ENCODE measurements at regions of chr14 and their contacts with region 1.

Region 1: GRCh38 chr14:20682435-20683124 is 1.8 kb upstream of the RNASE4 start:
- DNase-seq: peak; percentile 88
- ATAC-seq: peak; percentile 57
- H3K4me3 ChIP-seq: peak overlapping the region; percentile 81 to 95 (median 92)
- H3K4me3 Mint-ChIP-seq: no peak overlapping the region
- H3K27ac ChIP-seq: peak overlapping the region; percentile 92 to 94
- H3K27ac Mint-ChIP-seq: no peak overlapping the region
- H3K4me1 ChIP-seq: peaks cover 31 to 48% of the 10 kb centered on the region in 2 donors
- H3K4me1 Mint-ChIP-seq: peaks cover 15% of the 10 kb centered on the region
- H3K27me3 ChIP-seq: no peaks in the 10 kb centered on the region
- H3K27me3 Mint-ChIP-seq: no peaks in the 10 kb centered on the region
- CTCF ChIP-seq: no peak

Region 2: DNA sequence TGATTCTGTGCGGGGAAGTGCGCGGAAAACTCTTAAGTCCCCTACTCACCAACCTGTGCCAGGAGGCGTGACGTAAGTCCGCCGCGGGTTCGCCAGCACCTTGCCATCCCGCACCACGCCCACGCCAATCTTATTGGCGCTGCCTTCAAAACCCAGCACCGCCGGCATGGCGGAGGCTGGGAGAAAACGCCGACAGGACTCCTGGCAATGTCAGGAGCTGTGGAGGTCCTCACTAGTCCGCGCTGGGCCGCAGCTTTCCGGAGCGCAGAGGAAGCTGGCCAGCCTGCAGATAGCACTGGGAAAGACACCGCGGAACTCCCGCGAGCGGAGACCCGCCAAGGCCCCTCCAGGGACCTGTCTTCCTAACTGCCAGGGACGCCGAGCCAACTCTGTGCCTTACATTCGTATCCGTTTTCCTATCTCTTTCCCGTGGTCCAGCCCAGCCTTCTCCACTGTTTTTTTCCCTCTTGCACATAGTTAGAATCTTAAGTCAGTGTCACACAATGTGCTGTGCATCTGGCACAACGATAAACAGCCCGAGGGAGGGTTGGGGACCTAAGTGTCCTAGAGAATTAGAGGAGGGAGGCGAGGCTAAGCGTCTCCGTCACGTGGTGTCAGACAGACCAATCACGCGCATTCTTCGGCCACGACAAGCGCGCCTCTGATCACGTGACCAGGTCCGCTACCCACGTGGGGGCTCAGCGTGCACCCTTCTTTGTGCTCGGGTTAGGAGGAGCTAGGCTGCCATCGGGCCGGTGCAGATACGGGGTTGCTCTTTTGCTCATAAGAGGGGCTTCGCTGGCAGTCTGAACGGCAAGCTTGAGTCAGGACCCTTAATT is 227.8 kb before region 1 on chr14 and contains the starts of genes APEX1 and OSGEP:
- CTCF ChIA-PET with region 1: no interaction called
- POLR2A ChIA-PET with region 1: no interaction called
- intact Hi-C with region 1: loop called (anchors 1 kb)
- DNase-seq: peak; percentile 99
- ATAC-seq: peak; percentile 91
- H3K4me3 ChIP-seq: peak within 1 kb of the TSS; percentile 70 to 95 (median 92)
- H3K4me3 Mint-ChIP-seq: peak within 1 kb of the TSS; percentile 17
- H3K27ac ChIP-seq: peak within 1 kb of the TSS; percentile 87 to 97
- H3K27ac Mint-ChIP-seq: no peak within 1 kb of the TSS
- H3K4me1 ChIP-seq: peaks cover 21 to 54% of the 10 kb centered on the region in 2 donors
- H3K4me1 Mint-ChIP-seq: peaks cover 23% of the 10 kb centered on the region
- H3K27me3 ChIP-seq: no peaks in the 10 kb centered on the region
- H3K27me3 Mint-ChIP-seq: no peaks in the 10 kb centered on the region
- CTCF ChIP-seq: no peak
- total RNA-seq, gene APEX1: 103 and 111 TPM in 2 replicates
- total RNA-seq, gene OSGEP: 115 and 117 TPM in 2 replicates

Region 3: DNA sequence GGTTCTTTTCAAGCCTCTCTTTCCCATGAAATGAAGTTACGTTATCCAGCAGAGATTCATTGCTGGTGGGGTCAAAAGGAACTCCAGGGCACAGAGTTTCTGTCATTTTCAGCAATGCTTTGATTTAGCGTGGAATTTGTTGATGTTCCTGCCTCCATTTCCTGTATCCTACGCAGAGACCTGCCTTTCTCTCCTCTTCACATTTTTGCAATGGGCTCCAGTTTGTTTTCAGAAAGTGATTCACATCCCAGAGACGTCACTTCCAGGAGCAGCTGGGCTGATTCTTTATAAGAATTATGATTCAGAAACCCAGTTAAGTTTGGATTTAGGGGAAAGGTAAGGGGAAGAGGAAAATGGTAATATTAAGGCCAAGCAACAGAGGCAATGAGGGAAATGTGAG is 165.7 kb before region 1 on chr14:
- CTCF ChIA-PET with region 1: no interaction called
- POLR2A ChIA-PET with region 1: no interaction called
- intact Hi-C with region 1: no loop called
- DNase-seq: no peak
- ATAC-seq: no peak
- H3K4me3 ChIP-seq: no peak overlapping the region
- H3K4me3 Mint-ChIP-seq: no peak overlapping the region
- H3K27ac ChIP-seq: no peak overlapping the region
- H3K27ac Mint-ChIP-seq: no peak overlapping the region
- H3K4me1 ChIP-seq: peaks cover 9% of the 10 kb centered on the region in 2 donors
- H3K4me1 Mint-ChIP-seq: peaks cover 12% of the 10 kb centered on the region
- H3K27me3 ChIP-seq: no peaks in the 10 kb centered on the region
- H3K27me3 Mint-ChIP-seq: no peaks in the 10 kb centered on the region
- CTCF ChIP-seq: no peak

Region 4: DNA sequence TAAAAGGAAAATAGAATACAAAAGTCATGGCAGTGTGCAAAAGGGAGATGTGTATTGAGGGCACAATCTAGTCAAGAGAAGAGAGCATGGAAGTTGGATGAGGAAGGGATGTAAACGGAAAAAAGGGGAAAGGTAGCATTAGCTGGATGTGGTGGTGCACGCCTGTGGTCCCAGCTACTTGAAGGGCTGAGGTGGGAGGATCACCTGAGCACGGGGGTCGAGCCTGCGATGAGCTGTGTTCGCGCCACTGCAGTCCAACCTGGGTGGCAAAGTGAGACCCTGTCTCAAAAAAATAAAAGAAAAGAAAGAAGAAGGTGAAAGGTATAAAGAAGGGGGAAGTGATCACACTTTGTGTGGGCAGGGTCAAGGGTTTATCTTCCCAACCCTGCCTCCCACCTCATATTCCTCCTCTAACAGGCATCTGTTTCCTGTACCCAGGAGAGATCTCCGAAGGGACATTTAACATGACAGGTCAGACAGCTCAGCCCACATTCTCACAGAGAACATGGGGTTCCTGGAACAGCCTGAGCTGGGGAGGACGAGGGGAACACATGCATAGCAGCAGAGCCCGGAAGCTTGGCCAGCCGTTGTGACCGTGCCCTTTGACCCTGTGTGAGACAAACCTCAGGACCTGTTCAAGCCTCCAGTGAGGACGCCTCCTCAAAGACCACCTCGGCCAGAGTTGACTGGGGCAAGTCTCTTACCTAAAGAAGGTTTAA is 103.6 kb before region 1 on chr14:
- CTCF ChIA-PET with region 1: no interaction called
- POLR2A ChIA-PET with region 1: no interaction called
- intact Hi-C with region 1: no loop called
- DNase-seq: no peak
- ATAC-seq: no peak
- H3K4me3 ChIP-seq: no peak overlapping the region
- H3K4me3 Mint-ChIP-seq: no peak overlapping the region
- H3K27ac ChIP-seq: no peak overlapping the region
- H3K27ac Mint-ChIP-seq: no peak overlapping the region
- H3K4me1 ChIP-seq: no peaks in the 10 kb centered on the region
- H3K4me1 Mint-ChIP-seq: no peaks in the 10 kb centered on the region
- H3K27me3 ChIP-seq: no peaks in the 10 kb centered on the region
- H3K27me3 Mint-ChIP-seq: peaks cover 10% of the 10 kb centered on the region
- CTCF ChIP-seq: no peak

Region 5: DNA sequence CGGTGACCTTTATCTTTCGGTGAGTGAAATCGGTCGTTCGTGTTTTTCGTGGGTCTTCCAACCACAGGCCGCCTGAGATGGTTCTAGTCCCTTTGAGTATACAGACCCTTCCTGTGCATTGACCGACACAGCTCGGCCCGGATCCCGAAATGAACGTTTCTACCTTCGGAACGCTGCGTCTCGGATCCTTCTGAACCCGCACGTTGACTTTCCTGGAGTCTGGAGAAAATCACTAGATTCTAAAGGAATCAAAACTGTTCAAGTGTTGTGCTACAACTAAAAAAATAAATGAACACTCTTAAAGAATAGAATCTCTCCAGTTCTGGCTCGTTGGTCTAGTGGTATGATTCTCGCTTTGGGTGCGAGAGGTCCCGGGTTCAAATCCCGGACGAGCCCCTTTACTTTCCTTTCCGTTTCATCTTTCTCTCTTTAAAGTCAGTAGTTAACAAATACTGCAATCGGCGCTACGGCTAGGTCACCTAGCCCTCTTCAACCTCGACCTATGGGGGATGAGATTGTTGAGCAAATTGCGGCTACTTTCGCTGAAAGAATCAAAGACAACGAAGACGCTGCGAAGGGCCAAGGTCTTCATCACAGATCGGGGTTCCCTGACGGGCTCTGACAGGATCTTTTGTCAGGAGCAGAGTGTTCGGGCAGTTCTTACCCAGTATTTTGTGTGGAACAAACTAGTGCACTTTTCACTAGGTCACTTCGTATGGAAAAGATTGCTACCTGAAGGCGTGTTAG is 49.7 kb before region 1 on chr14:
- CTCF ChIA-PET with region 1: interaction called, 6 read pairs
- POLR2A ChIA-PET with region 1: no interaction called
- intact Hi-C with region 1: loop called (anchors 2 kb)
- DNase-seq: peak; percentile 81
- ATAC-seq: peak; percentile 49
- H3K4me3 ChIP-seq: peak overlapping the region in 4 of 5 experiments; percentile 33 to 65 (median 50)
- H3K4me3 Mint-ChIP-seq: peak overlapping the region; percentile 86
- H3K27ac ChIP-seq: no peak overlapping the region
- H3K27ac Mint-ChIP-seq: peak overlapping the region; percentile 91
- H3K4me1 ChIP-seq: peaks cover 35 to 38% of the 10 kb centered on the region in 2 donors
- H3K4me1 Mint-ChIP-seq: peaks cover 44% of the 10 kb centered on the region
- H3K27me3 ChIP-seq: peaks cover 0 to 38% (median 14%) of the 10 kb centered on the region in 4 experiments
- H3K27me3 Mint-ChIP-seq: peaks cover 35% of the 10 kb centered on the region
- CTCF ChIP-seq: no peak

Region 6: DNA sequence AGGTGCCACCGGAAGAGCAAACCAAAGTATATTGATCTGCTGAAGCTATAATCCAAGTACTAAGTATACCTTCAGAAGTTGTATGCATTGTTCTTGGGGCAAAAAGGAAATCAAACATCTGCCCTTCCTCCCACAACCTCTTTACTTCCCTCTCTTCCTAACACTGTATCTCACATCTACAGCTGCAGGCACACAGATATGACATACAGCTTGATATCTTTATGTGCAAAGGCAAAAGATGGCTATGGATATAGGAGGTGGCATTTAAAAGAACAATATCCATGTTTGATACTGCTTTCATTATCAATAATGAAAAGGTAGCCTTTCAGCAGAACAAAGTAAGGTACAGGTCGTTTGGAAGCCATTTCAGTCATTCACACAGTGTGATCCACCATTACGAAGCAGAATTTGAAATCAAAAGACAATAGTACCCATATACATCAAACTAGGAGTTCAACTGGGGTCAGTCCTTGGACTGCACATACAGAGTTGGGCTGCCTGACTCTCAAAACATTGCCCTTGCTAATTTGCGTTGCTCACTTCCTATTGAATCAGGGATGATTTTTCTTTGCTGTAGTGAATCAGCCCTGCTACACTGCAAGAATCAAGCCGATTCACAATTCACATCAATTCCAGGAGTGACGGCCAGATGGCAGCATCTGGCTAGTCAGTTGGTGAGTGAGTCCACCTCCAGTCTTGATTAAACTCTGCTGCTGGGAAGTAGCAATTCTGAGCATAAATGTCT is 14.9 kb after region 1 on chr14:
- CTCF ChIA-PET with region 1: interaction called, 64 read pairs
- POLR2A ChIA-PET with region 1: no interaction called
- intact Hi-C with region 1: no loop called
- DNase-seq: peak; percentile 81
- ATAC-seq: peak; percentile 86
- H3K4me3 ChIP-seq: no peak overlapping the region
- H3K4me3 Mint-ChIP-seq: no peak overlapping the region
- H3K27ac ChIP-seq: no peak overlapping the region
- H3K27ac Mint-ChIP-seq: no peak overlapping the region
- H3K4me1 ChIP-seq: no peaks in the 10 kb centered on the region
- H3K4me1 Mint-ChIP-seq: peaks cover 6% of the 10 kb centered on the region
- H3K27me3 ChIP-seq: no peaks in the 10 kb centered on the region
- H3K27me3 Mint-ChIP-seq: no peaks in the 10 kb centered on the region
- CTCF ChIP-seq: peak; percentile 88

Measured in B cell (primary cell).